ENCODE measurements at regions of chr10 and their contacts with region 1.

Region 1: GRCh38 chr10:89414146-89414878 is at the start of gene IFIT5:
- DNase-seq: peak; percentile 88
- ATAC-seq: peak; percentile 71
- H3K4me3 ChIP-seq: peak within 1 kb of the TSS; percentile 71 to 98 (median 90)
- H3K4me3 Mint-ChIP-seq: peak within 1 kb of the TSS; percentile 92
- H3K27ac ChIP-seq: peak within 1 kb of the TSS; percentile 91 to 93
- H3K27ac Mint-ChIP-seq: peak within 1 kb of the TSS; percentile 95
- H3K4me1 ChIP-seq: peaks cover 29 to 38% of the 10 kb centered on the region in 2 donors
- H3K4me1 Mint-ChIP-seq: peaks cover 44% of the 10 kb centered on the region
- H3K27me3 ChIP-seq: no peaks in the 10 kb centered on the region
- H3K27me3 Mint-ChIP-seq: no peaks in the 10 kb centered on the region
- CTCF ChIP-seq: no peak
- total RNA-seq, gene IFIT5: 23.2 and 25.0 TPM in 2 replicates

Region 2: DNA sequence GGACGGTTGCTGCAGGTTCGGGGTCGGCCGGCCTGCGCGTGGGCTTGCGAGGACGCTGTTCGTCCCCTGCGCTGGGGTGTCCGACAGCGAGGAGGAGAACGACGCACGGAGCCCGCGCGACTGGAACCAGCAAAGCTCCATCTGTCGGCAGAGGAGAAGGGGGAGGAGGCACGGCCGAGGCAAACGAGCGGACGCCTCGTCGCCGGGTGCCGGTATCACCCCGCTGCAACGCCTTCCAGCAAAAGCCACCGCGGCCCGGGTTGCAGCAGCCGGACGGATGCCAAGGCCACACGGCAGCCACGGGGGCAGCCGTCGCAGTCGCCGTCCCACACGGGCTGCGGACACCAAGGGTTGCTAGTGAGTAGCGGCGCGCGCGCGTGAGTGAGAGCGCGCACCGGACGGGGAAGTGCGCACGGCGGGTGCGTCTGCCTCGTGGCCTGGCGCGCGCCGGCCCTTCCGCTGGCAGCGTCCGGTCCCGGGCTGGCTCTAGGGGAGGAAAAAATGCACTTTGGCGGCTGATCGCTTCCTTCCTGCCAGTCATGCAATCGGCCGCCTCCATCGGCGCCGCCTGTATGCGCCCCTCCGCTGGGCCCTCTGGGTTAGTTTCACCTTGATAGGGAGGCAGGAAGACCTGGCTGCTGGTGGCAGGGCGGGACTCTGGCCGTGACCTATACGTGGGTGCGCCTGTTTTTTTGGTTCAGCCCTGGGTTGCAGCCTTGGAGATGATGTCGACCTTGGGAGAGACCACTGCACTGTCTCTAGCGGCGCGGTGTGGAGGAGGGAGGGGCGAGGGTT is 533.8 kb before region 1 on chr10:
- CTCF ChIA-PET with region 1: no interaction called
- POLR2A ChIA-PET with region 1: no interaction called
- intact Hi-C with region 1: loop called (anchors 2 kb)
- DNase-seq: peak; percentile 92
- ATAC-seq: peak; percentile 68
- H3K4me3 ChIP-seq: peak overlapping the region; percentile 50 to 84 (median 71)
- H3K4me3 Mint-ChIP-seq: peak overlapping the region; percentile 96
- H3K27ac ChIP-seq: peak overlapping the region; percentile 88 to 91
- H3K27ac Mint-ChIP-seq: peak overlapping the region; percentile 97
- H3K4me1 ChIP-seq: peaks cover 25 to 40% of the 10 kb centered on the region in 2 donors
- H3K4me1 Mint-ChIP-seq: peaks cover 57% of the 10 kb centered on the region
- H3K27me3 ChIP-seq: no peaks in the 10 kb centered on the region
- H3K27me3 Mint-ChIP-seq: no peaks in the 10 kb centered on the region
- CTCF ChIP-seq: peak; percentile 30

Region 3: DNA sequence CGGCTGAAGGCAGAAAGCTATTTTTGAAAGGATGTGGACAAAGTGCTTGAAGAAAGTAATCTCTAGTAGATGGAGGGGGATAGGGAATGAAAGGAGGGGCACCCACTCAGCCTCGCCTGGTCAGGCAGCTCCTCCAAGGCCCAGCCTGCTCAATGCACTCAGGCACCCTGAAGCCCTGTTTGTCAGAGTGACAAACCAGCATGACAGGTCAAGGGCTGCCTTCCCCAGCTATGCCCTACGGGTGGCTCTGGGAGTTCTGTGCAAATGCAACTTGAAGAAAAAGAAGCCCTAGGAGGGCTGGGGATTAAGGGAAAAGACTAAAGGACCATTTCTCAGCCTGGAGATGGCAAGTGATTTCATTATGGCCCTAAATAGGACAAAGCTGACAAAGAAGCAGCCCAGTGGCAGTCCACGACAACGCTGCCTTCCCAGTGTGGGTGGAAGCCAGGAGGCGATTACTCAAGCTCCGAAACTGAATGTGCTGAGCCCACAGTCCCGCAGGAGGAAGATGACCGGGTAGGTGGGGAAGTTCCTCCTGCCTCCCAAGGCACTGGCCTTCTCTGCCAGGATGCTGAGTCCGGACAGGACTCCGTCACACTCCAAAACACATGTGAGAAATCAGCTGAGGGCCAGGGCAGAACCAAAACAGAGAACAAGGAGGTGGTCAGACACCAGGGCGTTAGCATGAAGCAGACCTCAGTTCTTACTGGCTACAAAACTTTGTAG is 179.1 kb before region 1 on chr10:
- CTCF ChIA-PET with region 1: no interaction called
- POLR2A ChIA-PET with region 1: no interaction called
- intact Hi-C with region 1: no loop called
- DNase-seq: no peak
- ATAC-seq: no peak
- H3K4me3 ChIP-seq: no peak overlapping the region
- H3K4me3 Mint-ChIP-seq: no peak overlapping the region
- H3K27ac ChIP-seq: no peak overlapping the region
- H3K27ac Mint-ChIP-seq: no peak overlapping the region
- H3K4me1 ChIP-seq: no peaks in the 10 kb centered on the region
- H3K4me1 Mint-ChIP-seq: no peaks in the 10 kb centered on the region
- H3K27me3 ChIP-seq: no peaks in the 10 kb centered on the region
- H3K27me3 Mint-ChIP-seq: no peaks in the 10 kb centered on the region
- CTCF ChIP-seq: no peak

Region 4: GRCh38 chr10:89251409-89252224 is 162.7 kb before region 1 on chr10 and contains the start of gene LIPA:
- CTCF ChIA-PET with region 1: no interaction called
- POLR2A ChIA-PET with region 1: interaction called, 11 read pairs
- intact Hi-C with region 1: loop called (anchors 1 kb)
- DNase-seq: peak; percentile 99
- ATAC-seq: peak; percentile 95
- H3K4me3 ChIP-seq: peak within 1 kb of the TSS; percentile 65 to 92 (median 84)
- H3K4me3 Mint-ChIP-seq: peak within 1 kb of the TSS; percentile 94
- H3K27ac ChIP-seq: peak within 1 kb of the TSS; percentile 48 to 71
- H3K27ac Mint-ChIP-seq: peak within 1 kb of the TSS; percentile 85
- H3K4me1 ChIP-seq: peaks cover 18% of the 10 kb centered on the region in 2 donors
- H3K4me1 Mint-ChIP-seq: peaks cover 24% of the 10 kb centered on the region
- H3K27me3 ChIP-seq: no peaks in the 10 kb centered on the region
- H3K27me3 Mint-ChIP-seq: no peaks in the 10 kb centered on the region
- CTCF ChIP-seq: no peak
- total RNA-seq, gene LIPA: 36.5 and 38.9 TPM in 2 replicates

Region 5: GRCh38 chr10:89327784-89328441 is 86.4 kb before region 1 on chr10 and contains the start of gene IFIT3:
- CTCF ChIA-PET with region 1: interaction called, 7 read pairs
- POLR2A ChIA-PET with region 1: interaction called, 6 read pairs
- intact Hi-C with region 1: loop called (anchors 1 kb)
- DNase-seq: peak; percentile 65
- ATAC-seq: peak; percentile 31
- H3K4me3 ChIP-seq: peak within 1 kb of the TSS; percentile 40 to 83 (median 55)
- H3K4me3 Mint-ChIP-seq: peak within 1 kb of the TSS; percentile 88
- H3K27ac ChIP-seq: peak within 1 kb of the TSS; percentile 56 to 72
- H3K27ac Mint-ChIP-seq: peak within 1 kb of the TSS; percentile 87
- H3K4me1 ChIP-seq: peaks cover 33 to 51% of the 10 kb centered on the region in 2 donors
- H3K4me1 Mint-ChIP-seq: peaks cover 44% of the 10 kb centered on the region
- H3K27me3 ChIP-seq: no peaks in the 10 kb centered on the region
- H3K27me3 Mint-ChIP-seq: no peaks in the 10 kb centered on the region
- CTCF ChIP-seq: no peak
- total RNA-seq, gene IFIT3: 4.0 and 4.2 TPM in 2 replicates

Region 6: DNA sequence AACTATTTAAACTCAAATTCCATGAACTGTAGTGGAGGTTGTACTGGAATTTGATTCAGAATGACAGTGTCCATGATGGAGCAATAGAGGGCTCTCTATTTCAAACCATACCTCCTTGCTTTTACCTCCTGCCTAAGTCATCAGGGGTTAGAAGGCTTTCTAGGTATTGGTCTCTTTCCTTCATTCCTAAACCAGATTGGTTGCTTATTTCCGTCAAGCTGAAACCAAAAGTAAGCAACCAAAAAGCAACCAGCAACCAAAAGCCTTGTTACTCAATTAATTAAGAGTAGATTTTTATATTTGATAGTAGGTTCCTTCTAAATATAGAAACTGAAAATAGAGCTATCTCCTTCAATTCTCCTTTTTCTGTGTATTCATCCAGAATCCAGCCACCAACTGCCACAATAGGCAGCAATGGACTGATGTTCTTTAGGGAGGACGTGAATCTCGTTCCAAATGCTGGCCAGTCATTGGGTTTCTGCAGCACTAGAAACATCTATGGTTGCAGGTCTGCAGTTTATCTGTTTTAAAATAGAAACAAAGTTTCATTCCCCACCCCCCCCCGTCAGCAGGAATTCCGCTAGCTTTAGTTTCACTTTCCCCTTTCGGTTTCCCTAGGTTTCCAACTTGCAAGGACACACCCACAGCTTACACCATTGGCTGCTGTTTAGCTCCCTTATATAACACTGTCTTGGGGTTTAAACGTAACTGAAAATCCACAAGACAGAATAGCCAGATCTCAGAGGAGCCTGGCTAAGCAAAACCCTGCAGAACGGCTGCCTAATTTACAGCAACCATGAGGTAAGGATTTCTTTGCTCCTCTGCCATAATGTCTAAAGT is 22.2 kb before region 1 on chr10 and contains the start of gene IFIT1:
- CTCF ChIA-PET with region 1: interaction called, 9 read pairs
- POLR2A ChIA-PET with region 1: interaction called, 3 read pairs
- intact Hi-C with region 1: loop called (anchors 1 kb)
- DNase-seq: peak; percentile 78
- ATAC-seq: peak; percentile 87
- H3K4me3 ChIP-seq: peak within 1 kb of the TSS; percentile 59 to 94 (median 64)
- H3K4me3 Mint-ChIP-seq: peak within 1 kb of the TSS; percentile 93
- H3K27ac ChIP-seq: peak within 1 kb of the TSS; percentile 59 to 71
- H3K27ac Mint-ChIP-seq: peak within 1 kb of the TSS; percentile 81
- H3K4me1 ChIP-seq: peaks cover 19 to 20% of the 10 kb centered on the region in 2 donors
- H3K4me1 Mint-ChIP-seq: peaks cover 28% of the 10 kb centered on the region
- H3K27me3 ChIP-seq: no peaks in the 10 kb centered on the region
- H3K27me3 Mint-ChIP-seq: no peaks in the 10 kb centered on the region
- CTCF ChIP-seq: no peak
- total RNA-seq, gene IFIT1: 1.2 and 1.4 TPM in 2 replicates

Region 7: GRCh38 chr10:89701238-89702120 is 287.2 kb after region 1 on chr10 and contains the start of gene KIF20B:
- CTCF ChIA-PET with region 1: no interaction called
- POLR2A ChIA-PET with region 1: no interaction called
- intact Hi-C with region 1: loop called (anchors 1 kb)
- DNase-seq: peak; percentile 95
- ATAC-seq: peak; percentile 98
- H3K4me3 ChIP-seq: peak within 1 kb of the TSS; percentile 86 to 98 (median 95)
- H3K4me3 Mint-ChIP-seq: peak within 1 kb of the TSS; percentile 99
- H3K27ac ChIP-seq: peak within 1 kb of the TSS; percentile 79 to 87
- H3K27ac Mint-ChIP-seq: peak within 1 kb of the TSS; percentile 99
- H3K4me1 ChIP-seq: peaks cover 9 to 10% of the 10 kb centered on the region in 2 donors
- H3K4me1 Mint-ChIP-seq: peaks cover 32% of the 10 kb centered on the region
- H3K27me3 ChIP-seq: no peaks in the 10 kb centered on the region
- H3K27me3 Mint-ChIP-seq: no peaks in the 10 kb centered on the region
- CTCF ChIP-seq: peak; percentile 29
- total RNA-seq, gene KIF20B: 24.6 and 25.3 TPM in 2 replicates